Caco-2 (cell line): ENCODE measurements at regions of chr3 and their contacts with region 1.

Region 1: GRCh38 chr3:189773041-189773451 is 141.9 kb downstream of the TP63 start:
- DNase-seq: peak in 1 of 2 experiments; percentile 45
- H3K4me3 ChIP-seq: no peak overlapping the region
- H3K4me3 Mint-ChIP-seq: peak overlapping the region; percentile 72
- H3K27ac Mint-ChIP-seq: peak overlapping the region; percentile 87
- H3K4me1 ChIP-seq: peaks cover 22% of the 10 kb centered on the region
- H3K4me1 Mint-ChIP-seq: peaks cover 17% of the 10 kb centered on the region
- H3K27me3 ChIP-seq: no peaks in the 10 kb centered on the region
- H3K27me3 Mint-ChIP-seq: no peaks in the 10 kb centered on the region
- CTCF ChIP-seq: no peak

Region 2: DNA sequence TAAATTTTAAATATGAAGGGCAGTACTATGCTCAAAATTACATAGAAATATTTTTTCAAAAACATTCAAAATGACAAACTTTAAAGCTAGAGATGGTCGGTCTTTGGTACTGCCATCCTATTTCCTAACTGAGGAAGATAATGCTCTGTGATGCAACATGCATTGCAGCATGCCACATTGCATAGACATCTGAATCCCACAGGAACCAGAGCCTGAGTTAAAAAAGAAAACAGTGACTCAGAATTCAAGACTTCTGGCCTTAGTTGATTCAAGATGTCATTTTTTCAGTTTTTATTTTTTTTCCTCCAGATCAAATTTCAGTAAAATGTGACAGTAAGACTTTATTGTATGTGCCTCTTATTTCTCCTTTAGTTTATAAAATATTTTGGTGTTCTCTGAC is 108.7 kb before region 1 on chr3:
- CTCF ChIA-PET with region 1: no interaction called
- POLR2A ChIA-PET with region 1: no interaction called
- intact Hi-C with region 1: no loop called
- DNase-seq: no peak
- H3K4me3 ChIP-seq: no peak overlapping the region
- H3K4me3 Mint-ChIP-seq: no peak overlapping the region
- H3K27ac Mint-ChIP-seq: no peak overlapping the region
- H3K4me1 ChIP-seq: no peaks in the 10 kb centered on the region
- H3K4me1 Mint-ChIP-seq: no peaks in the 10 kb centered on the region
- H3K27me3 ChIP-seq: no peaks in the 10 kb centered on the region
- H3K27me3 Mint-ChIP-seq: no peaks in the 10 kb centered on the region
- CTCF ChIP-seq: no peak

Region 3: GRCh38 chr3:189756220-189757078 is 16.6 kb before region 1 on chr3:
- CTCF ChIA-PET with region 1: no interaction called
- POLR2A ChIA-PET with region 1: no interaction called
- intact Hi-C with region 1: loop called (anchors 1 kb)
- DNase-seq: peak; percentile 46 to 77
- H3K4me3 ChIP-seq: no peak overlapping the region
- H3K4me3 Mint-ChIP-seq: no peak overlapping the region
- H3K27ac Mint-ChIP-seq: no peak overlapping the region
- H3K4me1 ChIP-seq: peaks cover 9% of the 10 kb centered on the region; the same call in 1 of the 2 replicates
- H3K4me1 Mint-ChIP-seq: peaks cover 7% of the 10 kb centered on the region
- H3K27me3 ChIP-seq: no peaks in the 10 kb centered on the region
- H3K27me3 Mint-ChIP-seq: no peaks in the 10 kb centered on the region
- CTCF ChIP-seq: no peak

Region 4: GRCh38 chr3:189806180-189806951 is 33.3 kb after region 1 on chr3:
- CTCF ChIA-PET with region 1: no interaction called
- POLR2A ChIA-PET with region 1: no interaction called
- intact Hi-C with region 1: loop called (anchors 2 kb)
- DNase-seq: peak in 1 of 2 experiments; percentile 32
- H3K4me3 ChIP-seq: no peak overlapping the region
- H3K4me3 Mint-ChIP-seq: no peak overlapping the region
- H3K27ac Mint-ChIP-seq: peak overlapping the region; percentile 56
- H3K4me1 ChIP-seq: peaks cover 7% of the 10 kb centered on the region
- H3K4me1 Mint-ChIP-seq: peaks cover 10% of the 10 kb centered on the region
- H3K27me3 ChIP-seq: no peaks in the 10 kb centered on the region
- H3K27me3 Mint-ChIP-seq: no peaks in the 10 kb centered on the region
- CTCF ChIP-seq: no peak